Natural killer cell (primary cell): ENCODE measurements at regions of chr7 and their contacts with region 1.

Region 1: GRCh38 chr7:92134271-92135051 is at the start of gene CYP51A1:
- DNase-seq: peak; percentile 95 to 98
- ATAC-seq: peak; percentile 83 to 95 (median 84)
- H3K4me3 ChIP-seq: peak within 1 kb of the TSS; percentile 75
- H3K4me3 Mint-ChIP-seq: peak within 1 kb of the TSS; percentile 98
- H3K27ac ChIP-seq: peak within 1 kb of the TSS; percentile 91
- H3K27ac Mint-ChIP-seq: peak within 1 kb of the TSS; percentile 99
- H3K4me1 ChIP-seq: peaks cover 14% of the 10 kb centered on the region
- H3K4me1 Mint-ChIP-seq: peaks cover 36% of the 10 kb centered on the region in 2 donors
- H3K27me3 ChIP-seq: no peaks in the 10 kb centered on the region
- H3K27me3 Mint-ChIP-seq: no peaks in the 10 kb centered on the region
- CTCF ChIP-seq: no peak
- total RNA-seq, gene CYP51A1: 37.2 to 53.0 (median 49.3) TPM

Region 2: DNA sequence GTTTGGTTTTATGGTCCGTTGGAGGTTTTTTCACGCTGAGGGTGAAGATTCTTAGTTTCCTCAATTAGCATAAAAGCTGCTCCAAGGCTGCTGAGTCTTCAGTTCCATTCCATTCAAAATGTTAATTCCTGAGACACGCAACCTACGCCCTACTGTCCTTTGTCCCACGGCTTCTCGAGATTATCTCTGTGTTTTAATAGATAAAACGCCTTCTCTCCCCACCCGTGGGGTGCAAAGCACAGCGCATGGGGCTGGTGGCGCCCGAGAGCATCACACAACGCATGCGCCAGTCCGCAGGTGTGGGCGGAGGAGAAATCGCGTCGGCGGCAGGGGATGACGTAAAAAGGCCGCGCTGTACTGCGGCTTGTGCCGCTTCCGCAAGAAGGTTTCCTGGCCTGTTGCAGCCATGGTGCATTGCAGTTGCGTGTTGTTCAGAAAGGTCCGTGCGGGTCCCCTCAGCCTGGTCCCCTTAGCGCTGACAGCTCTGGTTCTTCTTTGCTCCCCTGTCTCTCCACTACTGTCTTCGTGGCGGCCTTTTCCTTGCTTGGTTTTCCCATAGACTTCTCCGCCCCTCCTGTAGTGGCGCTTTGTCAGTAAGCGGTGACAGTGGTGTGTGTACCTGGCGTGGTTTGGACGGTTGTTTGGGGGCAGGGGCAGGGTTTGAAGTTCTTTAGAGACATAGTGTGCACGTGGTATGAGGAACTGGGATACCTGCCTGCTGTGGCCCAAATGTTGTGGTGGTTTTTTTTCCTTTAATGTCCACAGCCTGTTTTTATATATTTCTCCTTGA is 1787.9 kb before region 1 on chr7 and contains the start of gene GTPBP10:
- intact Hi-C with region 1: loop called (anchors 5 kb)
- DNase-seq: peak; percentile 93 to 99
- ATAC-seq: peak; percentile 96 to 99 (median 98)
- H3K4me3 ChIP-seq: peak within 1 kb of the TSS; percentile 93
- H3K4me3 Mint-ChIP-seq: peak within 1 kb of the TSS; percentile 94
- H3K27ac ChIP-seq: peak within 1 kb of the TSS; percentile 95
- H3K27ac Mint-ChIP-seq: peak within 1 kb of the TSS; percentile 93 to 96
- H3K4me1 ChIP-seq: peaks cover 11% of the 10 kb centered on the region
- H3K4me1 Mint-ChIP-seq: peaks cover 34 to 53% of the 10 kb centered on the region in 2 donors
- H3K27me3 ChIP-seq: no peaks in the 10 kb centered on the region
- H3K27me3 Mint-ChIP-seq: no peaks in the 10 kb centered on the region
- CTCF ChIP-seq: peak; percentile 73
- total RNA-seq, gene GTPBP10: 15.2 to 19.6 (median 19.2) TPM

Region 3: GRCh38 chr7:91940572-91941341 is 193.7 kb before region 1 on chr7 and contains the start of gene AKAP9:
- intact Hi-C with region 1: loop called (anchors 2 kb)
- DNase-seq: peak; percentile 82 to 91
- ATAC-seq: peak; percentile 88 to 92 (median 92)
- H3K4me3 ChIP-seq: peak within 1 kb of the TSS; percentile 95
- H3K4me3 Mint-ChIP-seq: peak within 1 kb of the TSS; percentile 96
- H3K27ac ChIP-seq: peak within 1 kb of the TSS; percentile 98
- H3K27ac Mint-ChIP-seq: peak within 1 kb of the TSS; percentile 91 to 96
- H3K4me1 ChIP-seq: peaks cover 10% of the 10 kb centered on the region
- H3K4me1 Mint-ChIP-seq: peaks cover 29 to 35% of the 10 kb centered on the region in 2 donors
- H3K27me3 ChIP-seq: no peaks in the 10 kb centered on the region
- H3K27me3 Mint-ChIP-seq: peaks cover 8 to 9% of the 10 kb centered on the region in 2 donors
- CTCF ChIP-seq: no peak
- total RNA-seq, gene AKAP9: 78.8 to 93.0 (median 81.9) TPM

Region 4: GRCh38 chr7:92245487-92246362 is 111.3 kb after region 1 on chr7 and contains the starts of genes ANKIB1 and KRIT1:
- intact Hi-C with region 1: loop called (anchors 1 kb)
- DNase-seq: peak; percentile 82 to 93
- ATAC-seq: peak; percentile 75 to 85 (median 81)
- H3K4me3 ChIP-seq: peak within 1 kb of the TSS; percentile 74
- H3K4me3 Mint-ChIP-seq: peak within 1 kb of the TSS; percentile 100
- H3K27ac ChIP-seq: peak within 1 kb of the TSS; percentile 92
- H3K27ac Mint-ChIP-seq: peak within 1 kb of the TSS; percentile 99
- H3K4me1 ChIP-seq: peaks cover 11% of the 10 kb centered on the region
- H3K4me1 Mint-ChIP-seq: peaks cover 39 to 45% of the 10 kb centered on the region in 2 donors
- H3K27me3 ChIP-seq: no peaks in the 10 kb centered on the region
- H3K27me3 Mint-ChIP-seq: no peaks in the 10 kb centered on the region
- CTCF ChIP-seq: no peak
- total RNA-seq, gene ANKIB1: 70.6 to 90.2 (median 86.6) TPM
- total RNA-seq, gene KRIT1: 55.4 to 76.7 (median 62.6) TPM

Region 5: GRCh38 chr7:92313055-92313454 is 178.6 kb after region 1 on chr7:
- intact Hi-C with region 1: loop called (anchors 10 kb)
- DNase-seq: peak in 1 of 2 donors; percentile 27
- ATAC-seq: peak; percentile 93 to 96 (median 95)
- H3K4me3 ChIP-seq: no peak overlapping the region
- H3K4me3 Mint-ChIP-seq: peak overlapping the region; percentile 35
- H3K27ac ChIP-seq: peak overlapping the region; percentile 64
- H3K27ac Mint-ChIP-seq: peak overlapping the region; percentile 84 to 93
- H3K4me1 ChIP-seq: no peaks in the 10 kb centered on the region
- H3K4me1 Mint-ChIP-seq: peaks cover 18 to 19% of the 10 kb centered on the region in 2 donors
- H3K27me3 ChIP-seq: no peaks in the 10 kb centered on the region
- H3K27me3 Mint-ChIP-seq: no peaks in the 10 kb centered on the region
- CTCF ChIP-seq: no peak